Dorsolateral prefrontal cortex (tissue), 120 donors: ENCODE measurements at regions of chr15 and their contacts with region 1.

Region 1: DNA sequence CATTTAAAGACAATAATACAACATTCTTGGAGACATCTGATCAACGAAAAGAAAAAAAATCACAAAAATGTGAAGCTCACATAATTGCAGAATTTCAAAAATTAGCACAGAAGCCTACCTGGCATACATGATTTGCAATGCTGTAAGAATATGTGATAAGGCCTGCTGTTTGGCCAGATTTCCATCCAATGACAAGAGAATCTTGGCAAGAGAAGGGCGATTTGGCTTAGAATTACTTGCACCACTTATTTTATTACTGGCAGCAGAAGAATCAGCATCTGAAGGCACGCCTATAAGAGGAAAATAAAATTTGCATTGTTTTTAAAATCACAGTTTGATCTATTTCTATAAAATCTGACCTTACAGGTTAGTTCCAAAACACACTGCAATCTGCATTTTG is 70.3 kb upstream of the OCA2 start:
- DNase-seq: no peak
- H3K4me3 ChIP-seq: no peak overlapping the region
- H3K27ac ChIP-seq: peak overlapping the region in 17 of 59 donors; percentile 9 to 79 (median 55)
- H3K27me3 ChIP-seq: no peaks in the 10 kb centered on the region
- CTCF ChIP-seq: no peak

Region 2: GRCh38 chr15:28043691-28044091 is 125.7 kb before region 1 on chr15:
- intact Hi-C with region 1: no loop called
- DNase-seq: no peak
- H3K4me3 ChIP-seq: no peak overlapping the region
- H3K27ac ChIP-seq: no peak overlapping the region
- H3K27me3 ChIP-seq: no peaks in the 10 kb centered on the region
- CTCF ChIP-seq: no peak

Region 3: DNA sequence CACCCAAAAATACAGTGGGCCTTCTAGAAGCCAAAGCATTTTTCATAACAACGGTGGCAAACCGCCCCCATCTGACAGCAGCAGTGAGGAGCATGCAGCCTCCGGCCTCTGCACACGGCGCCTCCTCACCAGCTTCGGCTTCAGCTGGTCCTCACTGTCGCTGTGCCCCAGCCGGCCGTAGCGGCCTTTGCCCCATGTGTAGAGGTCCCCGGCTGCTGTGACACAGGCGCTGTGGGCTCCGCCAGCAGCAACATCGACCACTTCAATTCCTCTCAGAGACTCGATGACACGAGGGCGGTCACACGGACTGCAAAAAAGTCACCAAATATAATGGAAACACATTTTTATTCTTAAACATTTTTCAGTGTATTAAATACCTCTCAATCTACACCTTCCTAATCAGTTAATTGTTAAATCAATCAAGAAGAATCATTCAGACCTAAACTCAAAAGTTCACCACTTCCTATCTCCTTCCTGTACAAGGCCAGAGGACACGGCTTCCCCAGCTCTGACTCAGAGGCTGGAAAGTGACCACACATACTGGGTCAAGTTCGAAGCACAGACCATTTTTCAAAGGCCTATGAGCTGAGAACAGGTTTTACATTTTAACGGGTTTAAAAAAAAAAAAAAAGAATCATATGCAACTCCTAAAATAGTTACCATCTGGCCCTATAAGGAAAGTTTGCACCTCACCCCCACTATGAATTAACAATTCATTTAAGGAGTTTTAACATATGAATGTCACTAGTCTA is 36.7 kb before region 1 on chr15:
- intact Hi-C with region 1: loop called in 1 of 2 experiments (anchors 5 kb)
- DNase-seq: no peak
- H3K4me3 ChIP-seq: no peak overlapping the region
- H3K27ac ChIP-seq: peak overlapping the region in 7 of 59 donors; percentile 12 to 52 (median 30)
- H3K27me3 ChIP-seq: no peaks in the 10 kb centered on the region
- CTCF ChIP-seq: no peak